Activated CD8-positive, alpha-beta T cell treated with anti-CD3 and anti-CD28 coated beads, Interleukin-2, amount 10 ng/mL, durations not matched to agents 7 days and 5 days (primary cell): ENCODE measurements at regions of chr4 and their contacts with region 1.

Region 1: GRCh38 chr4:140330311-140330900 is 43.0 kb upstream of the SCOC start:
- DNase-seq: no peak
- ATAC-seq: no peak
- H3K4me3 Mint-ChIP-seq: no peak overlapping the region
- H3K27ac Mint-ChIP-seq: no peak overlapping the region
- H3K4me1 Mint-ChIP-seq: peaks cover 7% of the 10 kb centered on the region
- H3K27me3 Mint-ChIP-seq: peaks cover 16% of the 10 kb centered on the region

Region 2: DNA sequence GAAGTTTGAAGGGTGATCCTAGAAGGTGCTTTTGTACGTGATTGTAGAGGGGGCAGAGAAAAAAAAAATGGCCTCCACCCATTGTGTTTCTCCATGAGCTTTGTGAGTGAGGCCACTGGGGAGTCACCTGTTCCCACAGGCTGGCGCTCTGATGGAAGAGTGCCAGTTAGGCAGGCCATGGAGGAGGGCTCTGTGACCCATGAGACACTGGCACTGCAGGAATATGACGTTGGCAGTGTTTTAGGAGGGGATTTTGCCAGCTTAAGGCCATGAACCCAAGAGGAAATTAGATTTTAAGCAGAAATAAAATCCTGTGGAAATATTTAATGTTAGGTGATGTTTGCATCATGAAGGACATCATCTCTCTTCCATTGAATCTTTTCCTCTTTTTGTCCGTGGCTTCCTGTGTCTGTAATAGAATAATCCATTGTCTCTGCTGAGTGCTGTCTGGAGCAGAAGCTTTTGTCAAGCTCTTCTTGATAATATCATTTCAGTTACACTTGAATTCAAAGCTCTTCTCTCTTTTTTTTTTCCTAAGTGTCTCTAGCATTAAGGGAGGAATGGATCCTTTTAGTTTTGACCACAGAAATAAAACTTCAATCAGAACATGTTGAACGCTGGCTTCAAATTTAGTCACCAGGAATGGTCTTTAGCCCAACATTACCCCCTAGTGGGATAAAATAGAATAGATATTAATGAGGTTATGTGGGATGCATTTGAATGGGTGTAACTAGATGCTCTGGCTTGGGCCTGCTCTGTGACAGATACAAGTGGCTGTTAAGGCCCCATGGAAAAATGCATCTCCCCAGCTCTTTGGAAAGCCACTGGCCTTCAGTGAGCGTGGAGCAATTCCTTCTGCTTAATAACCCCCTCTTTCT is 279.4 kb after region 1 on chr4:
- CTCF ChIA-PET with region 1: interaction called, 10 read pairs
- POLR2A ChIA-PET with region 1: no interaction called
- DNase-seq: no peak
- ATAC-seq: peak; percentile 69
- H3K4me3 Mint-ChIP-seq: no peak overlapping the region
- H3K27ac Mint-ChIP-seq: no peak overlapping the region
- H3K4me1 Mint-ChIP-seq: no peaks in the 10 kb centered on the region
- H3K27me3 Mint-ChIP-seq: no peaks in the 10 kb centered on the region